ENCODE measurements at regions of chr2 and their contacts with region 1.

Region 1: GRCh38 chr2:101823347-101823791 is 125.9 kb downstream of the MAP4K4 start:
- DNase-seq: peak; percentile 78
- ATAC-seq: peak; percentile 91
- H3K4me3 ChIP-seq: no peak overlapping the region
- H3K4me3 Mint-ChIP-seq: peak overlapping the region; percentile 40
- H3K27ac ChIP-seq: peak overlapping the region in 1 of 2 donors; percentile 64
- H3K27ac Mint-ChIP-seq: peak overlapping the region; percentile 32
- H3K4me1 ChIP-seq: peaks cover 23 to 46% of the 10 kb centered on the region in 2 donors
- H3K4me1 Mint-ChIP-seq: peaks cover 69% of the 10 kb centered on the region
- H3K27me3 ChIP-seq: no peaks in the 10 kb centered on the region
- H3K27me3 Mint-ChIP-seq: no peaks in the 10 kb centered on the region
- CTCF ChIP-seq: peak; percentile 88

Region 2: DNA sequence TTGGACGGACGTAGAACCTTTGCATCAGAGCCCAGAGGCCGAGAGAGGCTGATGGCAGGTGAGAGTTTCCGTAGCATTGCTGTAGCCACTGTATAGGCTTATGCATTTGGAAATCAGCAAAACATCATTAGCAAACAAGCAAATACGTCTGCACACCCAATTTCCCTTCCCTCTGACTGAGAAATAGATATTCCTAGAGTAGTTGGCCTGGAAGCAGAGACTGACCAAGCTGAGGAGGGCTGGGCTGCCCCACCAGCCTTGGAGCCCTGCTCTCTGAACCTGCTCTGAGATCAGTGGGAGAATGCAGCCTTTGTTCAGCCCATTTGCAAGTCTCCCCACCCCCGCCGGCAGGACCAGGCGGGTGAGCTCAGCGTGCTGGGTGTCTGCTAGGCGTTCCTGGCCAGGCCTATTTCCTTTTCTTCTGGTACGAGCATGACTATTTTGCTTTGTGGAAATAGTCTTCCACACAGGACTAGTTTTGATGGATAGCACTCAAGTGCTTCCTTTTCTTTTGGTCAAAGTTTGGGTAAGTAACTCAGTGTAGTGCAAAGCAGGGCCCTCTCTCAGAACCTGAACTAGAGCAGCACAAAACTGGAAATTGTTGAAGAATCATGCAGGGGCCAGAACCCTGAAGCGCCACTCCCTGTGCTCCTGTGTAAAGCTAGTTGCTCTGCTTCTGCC is 493.0 kb before region 1 on chr2:
- CTCF ChIA-PET with region 1: no interaction called
- POLR2A ChIA-PET with region 1: no interaction called
- intact Hi-C with region 1: no loop called
- DNase-seq: no peak
- ATAC-seq: no peak
- H3K4me3 ChIP-seq: no peak overlapping the region
- H3K4me3 Mint-ChIP-seq: no peak overlapping the region
- H3K27ac ChIP-seq: no peak overlapping the region
- H3K27ac Mint-ChIP-seq: no peak overlapping the region
- H3K4me1 ChIP-seq: peaks cover 18 to 19% of the 10 kb centered on the region in 2 donors
- H3K4me1 Mint-ChIP-seq: no peaks in the 10 kb centered on the region
- H3K27me3 ChIP-seq: no peaks in the 10 kb centered on the region
- H3K27me3 Mint-ChIP-seq: no peaks in the 10 kb centered on the region
- CTCF ChIP-seq: no peak

Region 3: DNA sequence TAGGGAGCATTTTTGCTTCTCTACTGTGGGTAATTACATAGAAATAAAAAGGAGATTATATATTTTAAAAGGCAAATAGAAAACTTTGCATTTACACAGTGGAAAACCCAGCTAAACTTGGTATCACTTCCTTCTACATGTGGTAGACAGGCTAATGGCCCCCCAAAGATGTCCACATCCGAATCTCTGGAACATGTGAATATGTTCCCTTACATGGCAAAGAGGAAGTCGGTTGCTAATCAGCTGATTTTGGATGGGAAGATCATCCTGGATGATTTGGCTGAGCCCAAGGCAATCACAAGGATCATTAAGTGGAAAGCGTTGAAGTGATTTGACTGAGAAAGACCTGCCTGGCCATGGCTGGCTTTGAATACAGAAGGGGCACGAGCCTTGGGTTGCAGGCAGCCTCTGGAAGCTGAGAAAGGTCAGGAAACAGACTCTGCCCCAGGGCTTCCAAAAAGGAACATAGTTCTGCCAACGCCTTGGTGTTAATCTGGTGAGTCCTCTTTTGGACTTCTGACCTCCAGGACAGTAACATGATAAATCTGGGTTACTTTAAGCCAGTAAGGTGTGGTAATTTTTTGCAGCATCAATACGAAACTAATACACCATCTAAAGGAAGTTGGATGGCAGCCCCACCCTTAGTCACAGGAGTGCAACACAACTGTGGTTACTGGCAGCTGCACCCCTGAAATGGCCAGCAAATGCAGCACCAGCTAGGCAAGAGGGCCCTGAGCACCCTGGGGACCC is 462.1 kb before region 1 on chr2:
- CTCF ChIA-PET with region 1: no interaction called
- POLR2A ChIA-PET with region 1: interaction called, 10 read pairs
- intact Hi-C with region 1: no loop called
- DNase-seq: peak; percentile 46
- ATAC-seq: peak; percentile 88
- H3K4me3 ChIP-seq: peak overlapping the region in 2 of 5 experiments; percentile 12 to 31
- H3K4me3 Mint-ChIP-seq: peak overlapping the region; percentile 56
- H3K27ac ChIP-seq: no peak overlapping the region
- H3K27ac Mint-ChIP-seq: peak overlapping the region; percentile 55
- H3K4me1 ChIP-seq: peaks cover 19 to 20% of the 10 kb centered on the region in 2 donors
- H3K4me1 Mint-ChIP-seq: peaks cover 28% of the 10 kb centered on the region
- H3K27me3 ChIP-seq: no peaks in the 10 kb centered on the region
- H3K27me3 Mint-ChIP-seq: peaks cover 7% of the 10 kb centered on the region
- CTCF ChIP-seq: no peak

Region 4: DNA sequence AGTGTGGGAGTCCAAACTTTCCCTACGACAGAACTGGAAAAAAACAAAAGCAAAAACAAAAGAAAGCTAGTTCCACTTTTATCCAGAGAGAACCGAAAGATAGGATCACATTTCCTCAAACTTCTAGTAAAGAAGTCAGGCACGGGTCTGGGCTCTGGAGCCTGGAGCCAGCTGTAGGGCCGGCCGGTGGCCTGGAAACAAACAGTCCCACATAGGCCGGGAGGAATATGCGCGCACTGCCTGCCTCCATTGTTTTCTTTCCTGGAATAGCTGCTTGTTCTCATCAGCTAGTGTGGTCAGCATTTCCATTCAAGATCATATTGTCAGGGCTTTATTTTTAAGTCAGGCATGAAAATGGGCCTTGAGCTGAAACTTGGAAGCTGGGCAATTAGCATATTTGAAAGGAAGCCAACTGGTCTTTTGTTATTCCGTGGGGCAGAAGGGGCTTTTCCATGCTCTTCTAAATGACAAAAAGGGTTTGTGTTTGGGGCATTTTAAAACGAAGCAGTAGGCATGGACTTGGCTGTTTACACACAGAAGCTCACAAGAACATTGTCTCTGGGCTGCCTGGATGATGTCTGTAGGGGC is 289.7 kb before region 1 on chr2:
- CTCF ChIA-PET with region 1: no interaction called
- POLR2A ChIA-PET with region 1: no interaction called
- intact Hi-C with region 1: loop called (anchors 5 kb)
- DNase-seq: no peak
- ATAC-seq: no peak
- H3K4me3 ChIP-seq: no peak overlapping the region
- H3K4me3 Mint-ChIP-seq: no peak overlapping the region
- H3K27ac ChIP-seq: no peak overlapping the region
- H3K27ac Mint-ChIP-seq: no peak overlapping the region
- H3K4me1 ChIP-seq: no peaks in the 10 kb centered on the region
- H3K4me1 Mint-ChIP-seq: no peaks in the 10 kb centered on the region
- H3K27me3 ChIP-seq: no peaks in the 10 kb centered on the region
- H3K27me3 Mint-ChIP-seq: no peaks in the 10 kb centered on the region
- CTCF ChIP-seq: no peak

Region 5: GRCh38 chr2:101751875-101752619 is 71.3 kb before region 1 on chr2:
- CTCF ChIA-PET with region 1: no interaction called
- POLR2A ChIA-PET with region 1: interaction called, 11 read pairs
- intact Hi-C with region 1: no loop called
- DNase-seq: peak; percentile 82
- ATAC-seq: peak; percentile 83
- H3K4me3 ChIP-seq: peak overlapping the region in 2 of 5 experiments; percentile 8 to 28
- H3K4me3 Mint-ChIP-seq: peak overlapping the region; percentile 74
- H3K27ac ChIP-seq: peak overlapping the region; percentile 68 to 85
- H3K27ac Mint-ChIP-seq: peak overlapping the region; percentile 85
- H3K4me1 ChIP-seq: peaks cover 77 to 78% of the 10 kb centered on the region in 2 donors
- H3K4me1 Mint-ChIP-seq: peaks cover 80% of the 10 kb centered on the region
- H3K27me3 ChIP-seq: no peaks in the 10 kb centered on the region
- H3K27me3 Mint-ChIP-seq: no peaks in the 10 kb centered on the region
- CTCF ChIP-seq: no peak

Region 6: GRCh38 chr2:101776172-101777043 is 47.0 kb before region 1 on chr2:
- CTCF ChIA-PET with region 1: interaction called, 38 read pairs
- POLR2A ChIA-PET with region 1: no interaction called
- intact Hi-C with region 1: loop called (anchors 5 kb)
- DNase-seq: no peak
- ATAC-seq: no peak
- H3K4me3 ChIP-seq: no peak overlapping the region
- H3K4me3 Mint-ChIP-seq: no peak overlapping the region
- H3K27ac ChIP-seq: no peak overlapping the region
- H3K27ac Mint-ChIP-seq: no peak overlapping the region
- H3K4me1 ChIP-seq: peaks cover 79 to 87% of the 10 kb centered on the region in 2 donors
- H3K4me1 Mint-ChIP-seq: peaks cover 91% of the 10 kb centered on the region
- H3K27me3 ChIP-seq: no peaks in the 10 kb centered on the region
- H3K27me3 Mint-ChIP-seq: no peaks in the 10 kb centered on the region
- CTCF ChIP-seq: no peak

Measured in B cell (primary cell).